Psoas muscle (tissue), 8 donors: ENCODE measurements at regions of chr20 and their contacts with region 1.

Region 1: DNA sequence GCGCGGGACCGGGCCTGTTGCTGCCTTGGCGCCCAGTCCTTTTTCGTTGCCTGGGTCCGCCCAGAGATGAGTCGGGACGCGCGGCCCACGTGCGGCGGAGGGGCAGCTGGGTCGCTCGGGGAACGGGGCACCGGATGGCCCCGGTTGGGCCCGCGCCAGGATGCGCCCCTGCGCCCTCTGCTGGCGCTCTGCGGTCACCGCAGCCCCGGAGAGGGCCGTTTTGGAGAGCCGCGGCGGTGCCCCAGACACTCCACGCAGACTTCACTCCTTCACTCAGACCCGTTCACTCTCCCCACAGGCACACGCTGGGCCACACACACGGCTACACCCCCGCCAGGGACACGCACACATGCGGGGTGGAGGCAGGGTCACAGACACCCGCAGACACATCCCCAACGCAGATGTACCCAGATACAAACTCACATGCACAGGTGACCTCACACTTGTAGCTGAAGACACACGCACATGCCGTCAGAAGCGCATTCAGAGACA is 38.8 kb downstream of the SRC start:
- DNase-seq: peak; percentile 75 to 84
- ATAC-seq: peak; percentile 87 to 96 (median 91)
- H3K4me3 ChIP-seq: peak overlapping the region; percentile 69
- H3K27ac ChIP-seq: no peak overlapping the region
- H3K4me1 ChIP-seq: no peaks in the 10 kb centered on the region
- H3K27me3 ChIP-seq: peaks cover 0 to 2% (median 0%) of the 10 kb centered on the region in 3 donors
- CTCF ChIP-seq: peak; percentile 95

Region 2: GRCh38 chr20:37192137-37192854 is 192.4 kb before region 1 on chr20:
- intact Hi-C with region 1: loop called (anchors 2 to 5 kb)
- DNase-seq: peak; percentile 87 to 93
- ATAC-seq: peak; percentile 86 to 87 (median 86)
- H3K4me3 ChIP-seq: peak overlapping the region; percentile 15
- H3K27ac ChIP-seq: no peak overlapping the region
- H3K4me1 ChIP-seq: peaks cover 51% of the 10 kb centered on the region
- H3K27me3 ChIP-seq: no peaks in the 10 kb centered on the region
- CTCF ChIP-seq: peak; percentile 92

Region 3: DNA sequence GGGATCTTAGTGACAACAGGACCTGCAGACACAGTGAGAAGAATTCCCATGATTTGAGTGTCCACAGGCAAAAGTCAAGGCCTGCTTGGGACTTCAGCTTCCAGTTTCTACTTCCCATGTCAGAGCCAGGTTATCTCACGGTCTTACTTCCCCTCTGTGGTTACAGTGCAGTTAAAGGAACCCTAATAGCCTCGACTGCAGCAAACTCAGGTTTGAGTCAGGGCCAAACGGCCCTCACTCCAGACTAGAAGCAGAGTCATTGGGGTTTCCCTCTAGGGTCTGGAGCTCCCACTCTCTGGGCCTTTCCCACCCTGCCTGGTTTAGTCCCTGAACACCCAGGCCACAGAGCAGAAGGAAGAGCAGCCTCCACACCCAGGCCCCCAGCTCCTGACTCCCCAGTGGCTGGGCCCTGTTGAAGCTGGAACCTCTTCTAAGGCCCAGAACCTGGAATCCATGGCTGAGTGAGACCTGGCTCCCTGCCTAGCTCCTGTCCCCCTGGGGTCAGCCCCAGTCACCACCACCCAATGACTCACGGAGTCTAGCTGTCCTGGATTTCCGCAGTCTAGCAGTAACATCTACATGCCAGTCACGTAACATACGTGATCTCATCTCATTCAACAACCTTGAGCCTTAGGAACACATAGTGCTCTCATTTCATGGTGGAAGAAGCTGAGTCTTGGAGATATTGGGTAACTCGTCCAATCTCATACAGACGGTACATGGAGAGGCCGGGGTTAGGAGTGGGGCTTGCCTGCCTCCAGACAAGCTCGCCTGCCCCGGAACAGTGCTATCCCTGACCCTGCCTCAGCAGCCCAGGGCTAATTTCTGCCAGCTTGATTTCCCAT is 113.9 kb before region 1 on chr20:
- intact Hi-C with region 1: loop called in 1 of 2 experiments (anchors 2 kb)
- DNase-seq: no peak
- ATAC-seq: peak in 1 of 4 donors; percentile 21
- H3K4me3 ChIP-seq: no peak overlapping the region
- H3K27ac ChIP-seq: peak overlapping the region; percentile 9
- H3K4me1 ChIP-seq: no peaks in the 10 kb centered on the region
- H3K27me3 ChIP-seq: no peaks in the 10 kb centered on the region
- CTCF ChIP-seq: no peak

Region 4: DNA sequence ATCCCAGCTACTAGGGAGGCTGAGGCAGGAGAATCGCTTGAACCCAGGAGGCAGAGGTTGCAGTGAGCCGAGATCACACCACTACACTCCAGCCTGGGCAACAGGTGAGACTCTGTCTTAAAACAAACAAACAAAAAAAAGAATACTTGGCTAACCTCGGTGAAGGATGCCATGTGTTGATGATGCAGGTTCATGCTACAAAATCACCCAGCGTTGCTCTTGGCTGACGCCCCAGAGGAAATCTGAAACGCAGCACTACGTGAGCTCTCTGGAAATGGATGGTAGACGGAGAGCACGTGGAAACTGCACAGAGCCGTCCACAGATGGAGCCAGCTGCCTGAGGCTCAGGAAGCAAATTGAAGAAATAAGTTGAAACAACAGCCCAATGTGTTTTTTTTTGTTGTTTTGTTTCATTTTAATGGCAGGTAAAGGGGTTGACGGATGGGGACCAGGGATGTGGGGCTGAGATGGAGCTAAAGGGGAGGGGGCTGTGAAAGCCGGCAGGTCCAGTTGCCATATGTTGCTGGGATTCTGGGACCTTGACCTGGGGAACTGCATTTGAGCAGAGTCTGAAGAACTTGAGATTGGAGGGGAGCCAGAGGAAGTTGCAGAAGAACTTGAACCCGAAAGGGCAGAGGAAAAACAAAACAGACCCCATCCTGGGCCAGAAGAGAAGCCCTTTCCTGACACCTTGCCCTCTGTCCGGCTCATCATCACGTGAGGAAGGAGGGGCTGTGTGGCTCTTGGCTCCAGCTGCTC is 108.1 kb before region 1 on chr20:
- intact Hi-C with region 1: loop called (anchors 2 kb)
- DNase-seq: peak; percentile 33 to 80
- ATAC-seq: peak; percentile 89 to 98 (median 96)
- H3K4me3 ChIP-seq: no peak overlapping the region
- H3K27ac ChIP-seq: peak overlapping the region; percentile 56
- H3K4me1 ChIP-seq: peaks cover 10% of the 10 kb centered on the region
- H3K27me3 ChIP-seq: no peaks in the 10 kb centered on the region
- CTCF ChIP-seq: no peak

Region 5: DNA sequence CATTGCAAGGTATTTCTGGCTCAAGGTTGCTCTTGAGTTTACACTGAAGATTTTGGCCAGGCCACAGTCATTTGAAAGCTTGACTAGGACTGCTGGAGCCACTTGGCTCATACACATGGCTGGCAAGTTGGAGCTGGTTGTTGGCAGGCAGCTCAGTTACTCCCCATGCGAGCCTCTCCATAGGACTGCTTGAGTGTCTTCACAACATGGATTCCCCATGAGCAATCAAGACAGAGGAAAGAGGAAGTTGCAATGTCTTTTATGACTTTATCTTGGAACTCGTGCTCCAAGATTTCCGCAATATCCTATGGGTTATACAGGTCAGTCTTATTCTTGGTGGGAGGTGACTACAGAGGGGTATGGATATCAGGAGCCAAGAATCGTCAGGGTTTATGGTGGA is 96.6 kb before region 1 on chr20:
- intact Hi-C with region 1: loop called in 1 of 2 experiments (anchors 5 kb)
- DNase-seq: no peak
- ATAC-seq: peak in 3 of 4 donors; percentile 22 to 55 (median 38)
- H3K4me3 ChIP-seq: no peak overlapping the region
- H3K27ac ChIP-seq: peak overlapping the region; percentile 6
- H3K4me1 ChIP-seq: peaks cover 17% of the 10 kb centered on the region
- H3K27me3 ChIP-seq: no peaks in the 10 kb centered on the region
- CTCF ChIP-seq: no peak

Region 6: DNA sequence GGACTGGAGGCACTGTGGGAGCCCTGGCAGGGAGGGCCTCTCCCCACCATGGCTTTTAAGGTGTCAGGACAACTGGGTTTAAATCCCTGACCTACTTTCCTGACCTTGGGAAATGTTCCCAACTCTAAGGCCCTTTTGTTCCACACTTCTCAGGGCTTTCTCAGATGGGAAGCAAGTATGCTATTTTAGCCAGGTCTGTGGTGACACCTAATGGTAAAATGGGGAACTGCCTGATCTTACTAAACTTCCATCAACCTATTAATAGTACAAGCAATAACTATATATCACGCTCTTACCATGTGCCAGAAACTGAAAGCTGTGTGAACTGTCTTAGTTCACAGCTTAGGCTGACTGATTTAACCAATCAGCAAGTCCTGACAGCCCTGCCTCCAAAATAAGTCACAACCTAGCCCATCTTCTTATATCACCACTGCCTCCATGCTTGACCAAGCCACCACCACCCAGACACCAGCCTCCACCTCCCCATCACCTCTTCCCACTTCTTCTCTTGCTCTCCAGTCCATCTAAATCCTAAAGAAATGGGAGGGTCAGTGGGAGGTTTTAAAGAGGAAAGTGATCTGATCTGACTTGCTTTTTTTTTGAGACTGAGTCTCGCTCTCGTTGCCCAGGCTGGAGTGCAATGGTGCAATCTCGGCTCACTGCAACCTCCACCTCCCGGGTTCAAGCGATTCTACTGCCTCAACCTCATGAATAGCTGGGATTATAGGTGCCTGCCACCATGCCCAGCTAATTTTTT is 149.8 kb after region 1 on chr20:
- intact Hi-C with region 1: loop called (anchors 5 kb)
- DNase-seq: no peak
- ATAC-seq: peak; percentile 91 to 97 (median 94)
- H3K4me3 ChIP-seq: no peak overlapping the region
- H3K27ac ChIP-seq: no peak overlapping the region
- H3K4me1 ChIP-seq: peaks cover 3% of the 10 kb centered on the region
- H3K27me3 ChIP-seq: no peaks in the 10 kb centered on the region
- CTCF ChIP-seq: peak; percentile 92